ENCODE measurements at regions of chr1 and their contacts with region 1.

Region 1: GRCh38 chr1:31296486-31297276 is at the starts of genes SNRNP40 and ZCCHC17:
- DNase-seq: peak; percentile 95 to 96
- ATAC-seq: peak; percentile 99
- H3K4me3 ChIP-seq: peak within 1 kb of the TSS; percentile 65 to 91
- H3K27ac ChIP-seq: peak within 1 kb of the TSS in 1 of 2 donors; percentile 67
- H3K4me1 ChIP-seq: peaks cover 0 to 4% of the 10 kb centered on the region in 2 donors
- H3K27me3 ChIP-seq: no peaks in the 10 kb centered on the region
- total RNA-seq, gene SNRNP40: 31.2 to 32.8 TPM
- total RNA-seq, gene ZCCHC17: 17.7 to 21.3 TPM

Region 2: DNA sequence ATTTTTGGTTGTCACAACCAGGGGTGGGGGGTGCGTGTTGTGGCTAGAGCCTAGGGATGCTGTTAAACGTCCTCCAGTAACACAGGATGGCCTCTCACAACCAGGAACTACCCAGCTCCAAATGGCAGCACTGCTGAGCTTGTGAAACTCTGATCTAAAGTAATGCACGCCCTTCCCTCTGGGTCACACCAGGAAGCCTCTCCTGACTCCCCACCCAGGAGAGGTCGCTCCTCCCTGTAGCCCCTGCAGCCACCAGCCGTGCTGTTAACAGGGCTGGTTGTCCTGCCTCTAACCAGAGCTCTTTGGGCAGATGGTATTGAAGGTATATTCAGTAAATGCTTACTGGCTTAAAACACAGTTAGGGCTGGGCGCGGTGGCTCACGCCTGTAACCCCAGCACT is 130.2 kb before region 1 on chr1:
- intact Hi-C with region 1: loop called (anchors 10 kb)
- DNase-seq: no peak
- ATAC-seq: no peak
- H3K4me3 ChIP-seq: no peak overlapping the region
- H3K27ac ChIP-seq: no peak overlapping the region
- H3K4me1 ChIP-seq: no peaks in the 10 kb centered on the region
- H3K27me3 ChIP-seq: no peaks in the 10 kb centered on the region

Region 3: GRCh38 chr1:31413405-31414125 is 116.9 kb after region 1 on chr1:
- intact Hi-C with region 1: loop called in 1 of 2 experiments (anchors 10 kb)
- DNase-seq: peak; percentile 85 to 91
- ATAC-seq: peak; percentile 63
- H3K4me3 ChIP-seq: peak overlapping the region; percentile 39 to 55
- H3K27ac ChIP-seq: no peak overlapping the region
- H3K4me1 ChIP-seq: no peaks in the 10 kb centered on the region
- H3K27me3 ChIP-seq: no peaks in the 10 kb centered on the region

Region 4: GRCh38 chr1:31422505-31423319 is 126.0 kb after region 1 on chr1:
- intact Hi-C with region 1: loop called (anchors 10 kb)
- DNase-seq: peak; percentile 72 to 87
- ATAC-seq: peak; percentile 82
- H3K4me3 ChIP-seq: no peak overlapping the region
- H3K27ac ChIP-seq: no peak overlapping the region
- H3K4me1 ChIP-seq: no peaks in the 10 kb centered on the region
- H3K27me3 ChIP-seq: no peaks in the 10 kb centered on the region

Region 5: GRCh38 chr1:31595836-31596736 is 299.4 kb after region 1 on chr1:
- intact Hi-C with region 1: no loop called
- DNase-seq: no peak
- ATAC-seq: no peak
- H3K4me3 ChIP-seq: no peak overlapping the region
- H3K27ac ChIP-seq: no peak overlapping the region
- H3K4me1 ChIP-seq: no peaks in the 10 kb centered on the region
- H3K27me3 ChIP-seq: no peaks in the 10 kb centered on the region